Calu3 (cell line): ENCODE measurements at regions of chr6 and their contacts with region 1.

Region 1: DNA sequence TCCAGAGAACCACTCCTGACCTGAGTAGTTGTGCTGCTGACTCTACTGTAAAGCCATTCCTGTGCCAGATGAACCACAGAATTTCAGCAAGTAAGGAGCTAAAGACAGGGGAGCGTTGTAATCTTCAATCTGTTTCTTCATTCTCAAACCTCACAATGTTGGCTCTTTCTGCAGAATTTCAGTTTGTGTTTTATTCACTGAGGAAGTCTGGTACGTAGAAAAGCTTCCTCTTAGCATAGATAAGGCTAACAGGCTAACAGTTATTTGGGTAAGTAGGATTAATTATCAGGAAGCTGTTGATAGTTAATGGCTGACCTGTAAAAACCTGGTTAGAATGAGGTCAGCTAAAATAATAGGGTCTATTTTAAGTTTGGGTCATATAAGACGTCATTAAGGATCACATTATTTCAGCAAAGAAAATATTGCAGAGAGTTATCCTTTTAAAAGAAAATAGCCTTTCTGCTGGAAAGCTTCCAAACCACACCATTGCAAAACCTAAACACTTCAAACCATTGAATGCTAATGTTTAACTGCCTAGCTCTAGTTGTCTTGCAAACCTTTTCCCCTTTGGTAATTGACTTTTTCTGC is 14.1 kb upstream of the TENT5A start:
- DNase-seq: peak; percentile 67
- H3K4me3 Mint-ChIP-seq: peak overlapping the region; percentile 29
- H3K27ac Mint-ChIP-seq: peak overlapping the region; percentile 78
- H3K4me1 Mint-ChIP-seq: peaks cover 28% of the 10 kb centered on the region
- H3K27me3 Mint-ChIP-seq: peaks cover 13% of the 10 kb centered on the region
- CTCF ChIP-seq: no peak

Region 2: DNA sequence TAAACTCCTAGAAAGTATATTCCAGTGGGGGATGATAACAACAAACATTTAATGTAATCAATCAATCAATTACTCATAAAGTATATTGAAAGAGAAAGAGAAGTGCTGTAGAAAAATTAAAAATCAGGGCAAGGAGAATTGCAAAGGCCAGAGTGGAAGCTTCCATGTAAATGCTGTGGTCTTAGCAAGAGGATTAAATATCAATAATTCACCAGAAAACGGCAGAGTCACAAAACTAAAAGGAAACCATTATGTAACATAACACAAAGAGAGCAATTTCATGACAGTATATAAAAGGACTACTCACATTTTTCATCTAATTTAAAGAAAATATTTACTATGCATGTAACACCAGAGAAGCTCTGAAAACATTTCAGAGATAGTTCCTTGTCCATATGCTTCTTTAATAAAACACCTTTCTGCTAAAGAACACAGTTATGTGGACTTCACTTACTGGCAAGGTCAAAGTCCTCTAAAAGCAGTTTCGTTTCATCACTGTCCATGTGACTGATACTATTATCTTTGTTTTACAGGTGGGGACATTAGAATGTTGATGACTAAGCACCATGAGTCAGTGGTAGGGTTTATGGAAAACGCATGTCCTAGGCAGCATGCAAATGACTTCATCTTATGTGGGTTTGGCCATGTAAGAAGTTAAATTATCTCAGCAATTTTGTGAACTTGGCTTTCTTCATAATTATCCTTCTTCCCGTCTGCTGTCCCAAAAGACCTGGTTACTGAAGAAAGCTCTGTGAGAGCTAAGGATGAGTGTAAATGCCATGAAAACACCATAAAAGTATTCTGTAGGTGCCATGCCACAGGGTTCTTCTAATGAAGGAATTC is 171.7 kb after region 1 on chr6:
- CTCF ChIA-PET with region 1: interaction called, 3 read pairs
- intact Hi-C with region 1: loop called (anchors 5 kb)
- DNase-seq: peak; percentile 58
- H3K4me3 Mint-ChIP-seq: peak overlapping the region; percentile 62
- H3K27ac Mint-ChIP-seq: peak overlapping the region; percentile 98
- H3K4me1 Mint-ChIP-seq: peaks cover 55% of the 10 kb centered on the region
- H3K27me3 Mint-ChIP-seq: no peaks in the 10 kb centered on the region
- CTCF ChIP-seq: no peak